Panc1 (cell line): ENCODE measurements at regions of chr7 and their contacts with region 1.

Region 1: DNA sequence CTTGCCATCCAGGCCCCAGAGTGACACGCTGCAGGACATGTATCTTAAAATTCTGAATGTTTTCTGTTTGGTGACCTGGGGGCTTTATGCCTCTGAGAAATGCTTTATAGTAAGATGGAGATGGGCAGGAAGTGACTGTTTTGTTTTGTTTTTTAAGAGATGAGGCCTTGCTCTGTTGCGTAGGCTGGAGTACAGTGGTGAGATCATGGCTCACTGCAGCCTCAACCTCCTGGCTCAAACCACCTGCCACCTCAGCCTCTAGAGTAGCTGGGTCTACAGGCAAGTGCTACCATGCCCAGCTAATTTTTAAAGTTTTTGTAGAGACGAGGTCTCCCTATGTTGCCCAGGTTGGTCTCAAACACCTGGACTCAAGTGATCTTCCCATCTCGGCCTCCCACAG is 20.6 kb downstream of the ZNF777 start:
- DNase-seq: no peak
- ATAC-seq: no peak
- H3K4me3 ChIP-seq: no peak overlapping the region
- H3K27ac ChIP-seq: no peak overlapping the region
- H3K4me1 ChIP-seq: no peaks in the 10 kb centered on the region
- H3K27me3 ChIP-seq: no peaks in the 10 kb centered on the region
- CTCF ChIP-seq: no peak

Region 2: GRCh38 chr7:149027055-149027454 is 413.2 kb before region 1 on chr7:
- CTCF ChIA-PET with region 1: no interaction called
- POLR2A ChIA-PET with region 1: interaction called, 18 read pairs
- in situ Hi-C with region 1: no loop called
- intact Hi-C with region 1: no loop called
- DNase-seq: no peak
- ATAC-seq: no peak
- H3K4me3 ChIP-seq: peak overlapping the region; percentile 75 to 84
- H3K27ac ChIP-seq: peak overlapping the region; percentile 76
- H3K4me1 ChIP-seq: peaks cover 17% of the 10 kb centered on the region; the same call in 1 of the 2 replicates
- H3K27me3 ChIP-seq: no peaks in the 10 kb centered on the region
- CTCF ChIP-seq: no peak

Region 3: DNA sequence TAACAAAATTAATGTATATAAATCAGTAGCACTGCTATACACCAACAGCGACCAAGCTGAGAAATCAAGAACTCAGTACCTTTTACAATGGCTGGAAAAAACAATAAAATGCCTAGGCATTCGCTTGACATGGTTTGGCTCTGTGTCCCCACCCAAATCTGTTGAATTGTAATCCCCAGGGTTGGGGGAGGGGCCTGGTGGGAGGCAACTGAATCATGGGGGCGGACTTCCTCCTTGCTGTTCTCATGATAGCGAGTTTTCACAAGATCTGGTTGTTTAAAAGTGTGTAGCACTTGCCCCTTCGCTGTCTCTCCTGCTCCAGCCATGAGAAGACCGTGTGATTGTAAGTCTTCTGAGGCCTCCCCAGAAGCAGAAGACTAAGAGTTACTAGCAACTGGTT is 358.3 kb before region 1 on chr7:
- CTCF ChIA-PET with region 1: no interaction called
- POLR2A ChIA-PET with region 1: no interaction called
- in situ Hi-C with region 1: no loop called
- intact Hi-C with region 1: no loop called
- DNase-seq: no peak
- ATAC-seq: no peak
- H3K4me3 ChIP-seq: no peak overlapping the region
- H3K27ac ChIP-seq: no peak overlapping the region
- H3K4me1 ChIP-seq: no peaks in the 10 kb centered on the region
- H3K27me3 ChIP-seq: no peaks in the 10 kb centered on the region
- CTCF ChIP-seq: no peak

Region 4: GRCh38 chr7:149489391-149490024 is 49.3 kb after region 1 on chr7:
- CTCF ChIA-PET with region 1: no interaction called
- POLR2A ChIA-PET with region 1: no interaction called
- in situ Hi-C with region 1: no loop called
- intact Hi-C with region 1: no loop called
- DNase-seq: no peak
- ATAC-seq: peak; percentile 93
- H3K4me3 ChIP-seq: no peak overlapping the region
- H3K27ac ChIP-seq: no peak overlapping the region
- H3K4me1 ChIP-seq: no peaks in the 10 kb centered on the region
- H3K27me3 ChIP-seq: no peaks in the 10 kb centered on the region
- CTCF ChIP-seq: peak; percentile 70

Region 5: DNA sequence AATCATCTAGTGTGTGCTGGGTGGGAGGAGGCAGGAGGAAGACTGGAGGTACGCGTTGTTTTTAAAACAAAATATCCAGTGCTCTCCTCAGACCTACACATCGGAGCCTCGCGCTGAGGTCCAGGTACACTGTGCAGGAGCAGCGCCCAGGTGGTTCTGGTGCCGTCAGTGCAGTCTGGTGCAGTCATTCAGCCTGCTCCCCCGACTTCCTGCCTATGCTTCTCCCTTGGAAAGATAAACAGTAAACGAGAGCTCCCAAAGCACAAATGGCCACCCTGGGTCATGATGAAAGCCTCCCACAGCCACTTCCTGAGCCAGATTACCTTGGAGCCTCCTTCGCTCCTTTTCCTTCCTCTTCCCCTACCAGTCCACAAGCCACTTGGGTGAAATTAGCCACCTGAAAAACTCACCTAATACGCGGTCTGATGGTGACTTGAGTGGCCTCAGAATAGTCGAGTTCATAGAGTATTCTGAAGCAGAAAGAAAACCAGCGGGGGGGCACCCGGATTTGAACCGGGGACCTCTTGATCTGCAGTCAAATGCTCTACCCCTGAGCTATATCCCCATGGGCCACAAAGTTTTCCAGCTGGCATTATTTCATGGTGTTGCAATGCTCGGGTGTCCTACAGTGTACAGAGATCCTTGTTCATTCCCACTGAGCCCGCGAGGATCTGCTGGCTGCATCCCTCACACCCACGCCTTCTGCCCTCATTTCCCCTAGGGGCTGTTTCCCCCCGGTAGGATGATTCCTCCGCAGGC is 250.6 kb after region 1 on chr7:
- CTCF ChIA-PET with region 1: no interaction called
- POLR2A ChIA-PET with region 1: no interaction called
- in situ Hi-C with region 1: no loop called
- intact Hi-C with region 1: no loop called
- DNase-seq: peak; percentile 95
- ATAC-seq: peak; percentile 98
- H3K4me3 ChIP-seq: peak overlapping the region; percentile 16 to 31
- H3K27ac ChIP-seq: peak overlapping the region; percentile 58
- H3K4me1 ChIP-seq: peaks cover 10% of the 10 kb centered on the region
- H3K27me3 ChIP-seq: no peaks in the 10 kb centered on the region
- CTCF ChIP-seq: no peak